Gastrocnemius medialis (tissue), 4 donors: ENCODE measurements at regions of chr4 and their contacts with region 1.

Region 1: DNA sequence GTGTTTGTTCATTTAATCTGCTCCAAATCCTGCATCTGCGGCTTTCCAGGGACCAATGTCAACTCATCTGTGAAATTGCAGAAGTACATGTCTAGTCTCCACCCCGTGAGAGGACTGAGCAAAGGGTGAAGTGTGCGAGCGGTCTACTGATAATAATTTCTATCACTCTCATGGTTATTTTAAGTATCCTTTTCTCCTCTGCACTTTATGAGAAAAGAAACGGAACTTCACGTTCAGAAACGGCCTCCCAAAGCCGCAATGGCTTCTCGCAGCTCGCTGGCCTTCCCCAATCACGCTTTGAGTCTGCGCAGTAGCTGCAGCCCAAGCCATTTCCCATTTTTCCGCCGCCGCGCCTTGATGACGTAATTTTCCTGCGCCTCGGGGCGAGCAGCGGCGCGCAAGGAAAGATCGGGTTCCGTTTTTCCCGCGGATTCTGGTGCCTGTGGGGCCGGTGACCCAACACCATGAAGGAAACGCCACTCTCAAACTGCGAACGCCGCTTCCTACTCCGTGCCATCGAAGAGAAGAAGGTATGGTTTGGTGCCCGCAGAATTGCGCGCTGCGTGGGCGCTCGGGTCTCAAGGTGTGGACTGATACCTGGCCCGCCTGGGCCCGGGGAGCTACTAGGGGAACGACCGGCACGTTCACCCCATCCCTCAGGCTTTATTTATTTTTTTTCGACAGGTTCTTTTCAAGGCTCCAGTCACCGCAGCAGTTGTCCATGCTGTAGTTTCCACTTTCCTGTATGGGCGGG is at the start of gene EXOSC9:
- DNase-seq: peak; percentile 83 to 89
- ATAC-seq: peak; percentile 98
- H3K4me3 ChIP-seq: peak within 1 kb of the TSS; percentile 82 to 95 (median 89)
- H3K27ac ChIP-seq: peak within 1 kb of the TSS; percentile 84 to 95 (median 88)
- H3K4me1 ChIP-seq: peaks cover 17 to 20% of the 10 kb centered on the region in 2 donors
- H3K27me3 ChIP-seq: no peaks in the 10 kb centered on the region
- CTCF ChIP-seq: no peak
- POLR2A ChIP-seq: peak; percentile 44 to 52
- total RNA-seq, gene EXOSC9: 13.4 to 28.8 (median 19.9) TPM

Region 2: GRCh38 chr4:121597346-121597934 is 203.7 kb before region 1 on chr4:
- in situ Hi-C with region 1: no loop called
- intact Hi-C with region 1: no loop called
- DNase-seq: no peak
- ATAC-seq: no peak
- H3K4me3 ChIP-seq: no peak overlapping the region
- H3K27ac ChIP-seq: no peak overlapping the region
- H3K4me1 ChIP-seq: peaks cover 0 to 4% of the 10 kb centered on the region in 2 donors
- H3K27me3 ChIP-seq: no peaks in the 10 kb centered on the region
- CTCF ChIP-seq: no peak
- POLR2A ChIP-seq: no peak

Region 3: GRCh38 chr4:121696581-121697461 is 104.3 kb before region 1 on chr4 and contains the start of gene ANXA5:
- in situ Hi-C with region 1: no loop called
- intact Hi-C with region 1: loop called (anchors 2 kb)
- DNase-seq: peak; percentile 70 to 84
- ATAC-seq: peak; percentile 88 to 90
- H3K4me3 ChIP-seq: peak within 1 kb of the TSS; percentile 85 to 98 (median 94)
- H3K27ac ChIP-seq: peak within 1 kb of the TSS; percentile 89 to 97 (median 94)
- H3K4me1 ChIP-seq: peaks cover 27 to 40% of the 10 kb centered on the region in 2 donors
- H3K27me3 ChIP-seq: no peaks in the 10 kb centered on the region
- CTCF ChIP-seq: peak in 4 of 5 experiments; percentile 31 to 54 (median 38)
- POLR2A ChIP-seq: peak; percentile 76 to 77
- total RNA-seq, gene ANXA5: 59.2 to 181 (median 88.0) TPM

Region 4: DNA sequence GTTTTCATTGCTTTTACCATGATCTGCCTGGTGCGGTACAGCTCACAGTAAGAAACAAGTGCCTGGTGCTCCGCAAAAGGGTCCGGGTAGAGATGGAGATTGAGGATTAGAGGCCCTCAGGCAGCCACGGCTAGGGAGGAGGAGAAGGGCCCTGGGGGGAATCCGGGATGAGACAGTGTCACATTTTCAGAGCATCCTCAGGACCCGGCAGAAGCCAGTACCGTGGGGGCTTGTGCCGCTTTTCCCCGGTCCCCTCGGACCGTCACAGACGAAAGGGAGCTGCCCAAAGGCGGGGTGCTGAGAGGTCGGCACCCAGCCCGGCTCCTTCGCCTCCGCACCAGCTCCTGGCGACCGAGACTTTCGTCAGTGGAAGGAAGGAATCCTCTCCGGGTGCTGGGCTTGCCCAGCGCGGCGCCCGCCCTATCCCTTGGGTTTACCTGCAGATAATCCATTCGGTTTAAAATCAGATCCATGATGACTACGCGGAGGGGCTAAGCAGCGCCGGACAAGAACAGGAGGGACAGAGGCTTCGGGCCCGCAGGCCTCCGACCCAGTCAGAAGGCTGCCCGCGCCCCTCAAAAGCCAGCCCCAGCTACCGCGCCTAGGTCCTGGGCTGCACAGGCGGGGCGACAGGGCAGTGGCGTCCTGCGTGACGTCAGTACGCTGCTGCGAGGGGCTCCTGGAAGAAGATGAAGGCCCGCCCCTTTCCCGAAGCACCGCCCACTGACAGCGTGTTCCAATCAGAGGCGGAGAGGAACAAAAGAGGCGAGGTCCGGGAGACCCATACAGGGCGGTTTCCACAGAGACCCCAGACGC is 68.9 kb after region 1 on chr4 and contains the start of gene BBS7:
- in situ Hi-C with region 1: no loop called
- intact Hi-C with region 1: loop called (anchors 2 kb)
- DNase-seq: peak; percentile 91 to 93
- ATAC-seq: peak; percentile 98
- H3K4me3 ChIP-seq: peak within 1 kb of the TSS; percentile 78 to 98 (median 96)
- H3K27ac ChIP-seq: peak within 1 kb of the TSS; percentile 83 to 90 (median 90)
- H3K4me1 ChIP-seq: peaks cover 0 to 4% of the 10 kb centered on the region in 2 donors
- H3K27me3 ChIP-seq: no peaks in the 10 kb centered on the region
- CTCF ChIP-seq: no peak
- POLR2A ChIP-seq: peak in 1 of 2 donors; percentile 64
- total RNA-seq, gene BBS7: 4.5 to 11.1 (median 6.7) TPM

Region 5: DNA sequence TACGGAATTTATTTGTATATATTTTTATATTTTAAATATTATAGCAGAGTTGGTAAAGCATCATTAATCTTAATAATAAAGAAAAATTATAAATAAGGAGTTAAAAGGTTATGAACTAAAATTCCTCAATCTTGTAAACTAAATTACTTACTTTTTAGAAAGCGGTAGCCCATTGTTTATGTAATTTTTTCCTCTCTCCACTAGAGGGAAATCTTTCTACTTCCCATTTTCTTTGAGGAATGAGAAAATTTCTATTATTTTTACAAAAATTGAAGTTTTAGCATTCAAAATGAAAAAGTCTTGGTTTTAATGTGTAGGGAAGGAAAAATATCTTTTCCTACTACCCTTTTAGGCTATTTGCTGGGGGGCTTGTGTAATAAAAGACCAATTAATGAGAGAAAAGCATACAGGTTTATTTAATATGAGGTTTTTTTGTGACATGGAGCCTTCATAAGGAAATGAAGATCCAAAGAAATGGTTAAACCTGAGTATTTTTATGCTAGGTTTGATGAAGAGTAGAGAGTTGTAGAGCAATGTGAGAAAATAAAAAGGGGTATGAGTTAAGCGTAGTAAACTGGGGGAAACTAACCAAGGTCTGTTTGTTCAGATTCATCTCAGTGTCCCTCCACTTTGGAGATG is 509.0 kb after region 1 on chr4:
- in situ Hi-C with region 1: no loop called
- intact Hi-C with region 1: no loop called
- DNase-seq: no peak
- ATAC-seq: no peak
- H3K4me3 ChIP-seq: no peak overlapping the region
- H3K27ac ChIP-seq: no peak overlapping the region
- H3K4me1 ChIP-seq: no peaks in the 10 kb centered on the region
- H3K27me3 ChIP-seq: no peaks in the 10 kb centered on the region
- CTCF ChIP-seq: peak in 1 of 5 experiments; percentile 35
- POLR2A ChIP-seq: no peak